ENCODE measurements at regions of chr18 and their contacts with region 1.

Region 1: DNA sequence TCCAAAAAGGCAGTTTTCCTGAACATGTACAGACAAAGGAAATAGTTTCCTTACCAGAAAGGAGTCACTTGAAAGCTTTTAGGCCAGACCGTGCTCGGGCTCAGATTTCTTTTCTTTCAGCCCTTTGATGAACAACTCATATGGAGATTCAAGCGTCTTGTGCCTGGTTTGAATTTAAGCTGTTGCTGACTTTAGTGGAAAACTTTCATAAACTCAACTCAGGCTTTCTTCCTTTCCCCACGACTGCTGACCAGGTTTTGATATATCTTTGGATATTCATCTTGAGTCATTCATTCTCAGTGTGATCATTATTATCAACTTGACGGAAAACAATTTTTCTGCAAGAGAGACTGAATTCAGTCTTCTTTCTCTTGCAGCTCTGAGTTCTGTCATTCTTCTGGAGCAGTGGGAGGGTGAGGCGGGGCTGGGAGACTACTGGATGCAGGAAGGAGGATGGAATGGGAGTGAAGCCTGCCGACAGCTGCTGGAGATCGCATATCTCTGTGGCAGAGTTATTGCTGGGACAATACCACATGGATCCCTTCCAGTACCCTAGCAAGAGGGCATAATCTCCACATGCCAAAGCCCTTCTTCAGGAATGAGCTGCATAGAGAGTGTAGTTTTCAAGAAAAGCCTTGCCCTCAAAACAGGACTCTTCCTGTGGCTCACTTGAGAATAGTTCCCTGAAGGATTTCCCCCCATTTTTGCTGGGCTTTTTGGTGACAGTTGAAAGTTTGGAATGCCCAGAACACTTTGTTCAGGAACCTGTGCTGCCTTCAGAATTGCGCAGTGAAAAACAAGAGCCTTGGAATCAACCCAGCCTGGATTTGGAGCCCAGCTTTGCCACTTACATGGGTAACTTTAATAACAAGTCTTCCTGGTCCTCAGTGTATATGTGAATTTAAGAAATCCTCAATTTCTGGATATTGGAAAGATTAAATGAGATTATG is 364.4 kb downstream of the ZNF521 start:
- DNase-seq: peak; percentile 41 to 44
- H3K4me3 ChIP-seq: no peak overlapping the region
- H3K4me1 ChIP-seq: peaks cover 18% of the 10 kb centered on the region
- H3K27me3 ChIP-seq: no peaks in the 10 kb centered on the region

Region 2: DNA sequence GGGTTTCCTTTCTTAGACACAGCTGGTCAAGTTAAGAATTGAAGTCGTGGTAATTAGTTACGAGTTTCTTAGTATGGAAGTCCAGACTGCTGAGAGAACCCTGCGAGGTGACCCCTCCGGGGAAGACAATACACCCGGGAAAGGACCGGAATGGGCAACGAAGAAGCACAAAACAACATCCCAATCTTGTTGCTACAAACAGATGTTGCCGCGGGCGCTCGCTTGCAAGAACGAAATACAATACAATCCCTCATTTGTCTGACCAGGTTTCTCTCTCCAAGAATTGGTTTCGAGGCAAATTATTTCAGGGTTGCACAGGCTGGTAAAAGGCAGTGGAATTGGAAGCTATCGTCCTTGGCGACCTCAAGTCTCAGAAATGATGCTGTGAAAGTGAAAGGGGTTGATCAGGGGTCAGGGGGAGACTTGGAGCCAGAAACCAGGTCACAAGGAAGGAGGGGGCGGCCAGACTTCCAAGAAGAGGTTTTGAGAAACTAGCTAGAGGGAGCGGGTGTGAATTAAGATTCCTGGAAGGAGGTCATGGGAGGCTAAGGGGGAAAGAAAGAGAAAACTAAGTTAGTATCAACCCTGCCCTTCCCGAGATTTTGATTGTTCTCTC is 125.3 kb before region 1 on chr18:
- in situ Hi-C with region 1: no loop called
- DNase-seq: no peak
- H3K4me3 ChIP-seq: no peak overlapping the region
- H3K4me1 ChIP-seq: no peaks in the 10 kb centered on the region
- H3K27me3 ChIP-seq: peaks cover 4% of the 10 kb centered on the region; the same call in 1 of the 2 replicates

Region 3: DNA sequence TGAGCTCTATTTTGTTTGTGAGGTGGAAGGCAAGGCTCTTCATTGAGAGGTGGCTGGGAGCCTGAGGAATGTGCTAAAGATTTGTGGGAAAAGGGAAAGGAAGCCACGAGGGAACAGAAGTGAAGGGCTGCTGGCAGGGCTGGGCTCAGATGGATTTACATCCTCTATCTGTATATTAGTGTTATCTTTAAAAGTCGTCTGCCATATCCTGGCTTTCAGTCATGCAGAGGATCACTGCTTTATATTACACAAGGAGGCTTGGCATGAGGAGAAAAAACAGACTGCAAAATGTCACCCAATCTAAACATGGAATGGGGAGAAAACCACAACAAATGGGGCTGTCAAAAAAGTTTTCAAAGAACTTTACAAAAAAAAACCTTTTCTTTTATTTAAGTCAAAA is 92.7 kb before region 1 on chr18:
- in situ Hi-C with region 1: no loop called
- DNase-seq: no peak
- H3K4me3 ChIP-seq: no peak overlapping the region
- H3K4me1 ChIP-seq: no peaks in the 10 kb centered on the region
- H3K27me3 ChIP-seq: no peaks in the 10 kb centered on the region

Region 4: DNA sequence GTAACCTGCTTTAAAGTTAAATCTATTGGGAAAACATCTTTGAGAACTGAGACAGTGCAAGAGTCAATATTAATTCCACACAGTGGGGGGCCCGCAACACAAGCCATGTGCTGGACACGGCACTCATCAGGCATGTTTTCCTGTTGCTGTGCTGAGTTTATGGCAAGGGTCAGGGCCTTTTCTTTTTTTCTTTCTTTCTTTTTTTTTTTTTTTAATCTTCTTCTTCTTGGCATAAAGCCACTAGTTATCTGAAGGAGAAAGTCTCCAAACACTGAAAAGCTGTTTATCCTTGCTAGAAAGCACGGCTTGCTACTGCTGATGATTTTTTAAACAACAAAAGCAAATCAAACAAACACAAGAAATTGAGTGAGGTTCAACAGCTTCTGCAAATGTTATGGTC is 112.3 kb after region 1 on chr18:
- in situ Hi-C with region 1: loop called (anchors 25 kb)
- DNase-seq: no peak
- H3K4me3 ChIP-seq: no peak overlapping the region
- H3K4me1 ChIP-seq: no peaks in the 10 kb centered on the region
- H3K27me3 ChIP-seq: no peaks in the 10 kb centered on the region

Region 5: GRCh38 chr18:25111377-25112288 is 124.1 kb after region 1 on chr18:
- in situ Hi-C with region 1: no loop called
- DNase-seq: no peak
- H3K4me3 ChIP-seq: no peak overlapping the region
- H3K4me1 ChIP-seq: no peaks in the 10 kb centered on the region
- H3K27me3 ChIP-seq: no peaks in the 10 kb centered on the region

Region 6: DNA sequence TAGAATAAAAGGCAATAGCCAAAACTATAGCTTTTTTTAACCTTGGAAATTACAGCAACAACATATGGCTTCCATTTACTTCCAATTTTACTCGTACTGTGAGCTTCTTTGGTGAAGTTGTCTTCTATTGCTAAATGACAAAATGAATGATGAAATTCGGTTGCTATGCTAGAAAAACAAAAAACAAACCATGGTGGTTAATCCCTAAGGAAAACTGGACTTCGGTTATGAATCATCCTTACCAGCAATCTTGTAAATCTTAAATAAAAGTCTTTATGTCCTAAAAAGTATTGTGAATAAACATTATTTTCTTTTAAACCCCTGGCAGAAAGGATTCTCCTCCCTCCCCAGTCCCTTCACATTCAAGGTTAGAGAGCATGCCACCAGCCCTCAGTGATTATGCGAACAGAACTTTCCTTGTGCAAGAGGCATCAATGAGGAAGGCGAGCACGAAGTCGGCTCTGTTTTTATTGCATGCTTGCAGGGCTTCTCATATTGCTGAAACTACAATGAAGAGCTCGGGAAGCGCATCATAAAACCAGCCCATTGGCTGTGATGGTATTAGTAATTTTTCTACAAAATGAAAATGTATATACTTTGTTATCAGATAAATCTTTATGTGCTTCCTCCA is 301.5 kb after region 1 on chr18:
- in situ Hi-C with region 1: no loop called
- DNase-seq: peak in 1 of 2 experiments; percentile 9
- H3K4me3 ChIP-seq: no peak overlapping the region
- H3K4me1 ChIP-seq: no peaks in the 10 kb centered on the region
- H3K27me3 ChIP-seq: no peaks in the 10 kb centered on the region